Posterior vena cava (tissue), 2 donors: ENCODE measurements at regions of chr4 and their contacts with region 1.

Region 1: DNA sequence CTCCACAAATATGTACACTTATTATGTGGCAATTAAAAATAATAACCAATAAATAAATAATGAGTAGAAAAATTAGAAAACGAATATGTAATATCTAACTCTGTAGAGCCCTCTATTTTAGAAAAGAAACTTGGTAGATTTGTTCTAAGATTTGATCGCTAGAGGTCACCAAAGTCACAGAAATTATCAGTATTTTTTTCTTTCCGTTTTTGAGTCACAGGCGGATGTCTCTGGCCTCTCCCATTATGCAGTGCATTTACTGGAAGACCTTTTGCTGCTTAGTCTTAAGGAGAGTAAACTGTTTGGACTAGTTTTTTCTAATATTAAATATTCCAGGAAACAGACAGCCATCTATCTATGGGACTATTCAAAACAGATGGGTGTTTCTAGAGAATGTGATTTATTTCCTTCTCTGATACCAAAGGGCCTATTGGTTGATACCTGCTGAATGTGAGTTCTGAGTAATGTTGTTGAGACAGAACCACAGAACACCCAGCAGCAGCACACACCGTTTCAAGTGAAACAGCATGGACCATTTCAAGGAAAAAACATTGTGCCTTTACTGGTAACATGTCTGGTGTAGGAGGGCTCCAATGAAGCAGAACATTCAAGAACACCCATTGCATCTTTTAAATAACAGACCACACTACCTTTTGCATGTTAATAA is 34.0 kb upstream of the GYPA start:
- DNase-seq: no peak

Region 2: DNA sequence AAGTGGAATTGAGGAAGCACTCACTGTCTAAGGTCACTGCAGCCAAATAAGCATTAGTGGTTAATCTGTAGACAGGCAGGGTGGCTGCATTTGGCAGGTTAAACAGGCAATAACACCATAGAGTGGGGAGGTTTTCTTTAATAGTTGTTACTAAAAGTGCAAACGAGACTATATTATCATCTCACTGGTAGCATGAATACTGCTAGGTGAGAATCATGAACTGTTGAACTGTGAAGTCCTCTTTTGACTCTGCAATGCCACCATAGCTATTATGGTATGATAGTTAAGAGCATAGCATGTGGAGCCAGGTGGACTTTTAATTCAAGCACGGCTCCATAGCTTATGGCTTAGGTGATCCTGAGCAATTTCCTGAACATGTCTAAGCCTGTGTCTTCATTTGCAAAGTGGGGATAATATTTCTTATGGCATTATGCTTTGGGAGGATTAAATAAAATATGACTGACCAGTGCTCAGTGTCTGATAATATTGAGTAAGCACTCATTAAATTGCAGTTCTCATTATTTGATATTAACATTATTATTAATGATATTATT is 235.8 kb after region 1 on chr4:
- intact Hi-C with region 1: no loop called
- DNase-seq: no peak

Region 3: DNA sequence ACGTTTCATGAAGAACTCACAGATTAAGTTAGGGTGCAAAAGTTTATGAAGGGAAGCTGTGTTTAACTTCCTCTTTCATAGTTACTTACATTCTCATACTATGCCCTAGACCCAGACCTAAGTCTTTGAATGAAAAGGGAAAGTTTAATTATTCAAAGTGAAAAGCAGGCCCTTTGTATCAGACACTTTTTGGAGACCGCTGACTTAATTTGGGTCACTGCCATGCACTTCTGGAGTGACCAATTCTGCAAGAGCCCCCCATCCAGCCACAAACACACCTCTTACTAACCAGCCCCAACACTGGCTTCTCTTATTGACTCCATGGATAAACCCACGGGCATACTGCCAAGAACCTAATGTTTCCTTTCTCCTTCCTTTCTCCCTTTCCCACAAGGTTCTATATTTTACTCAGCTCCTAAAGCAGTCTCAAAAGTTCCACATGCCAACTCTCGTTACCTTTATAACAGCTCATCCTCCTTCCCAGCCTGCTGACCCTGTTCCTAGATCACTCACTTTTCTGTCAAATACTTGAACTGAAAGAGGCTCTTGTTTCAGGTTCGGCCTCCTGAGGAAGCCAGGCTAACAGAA is 958.1 kb after region 1 on chr4:
- intact Hi-C with region 1: loop called in 1 of 2 experiments (anchors 10 kb)
- DNase-seq: no peak